ENCODE measurements at regions of chr1 and their contacts with region 1.

Region 1: GRCh38 chr1:46667782-46668760 is at the start of gene ATPAF1:
- DNase-seq: peak; percentile 90
- ATAC-seq: peak; percentile 95
- total RNA-seq, gene ATPAF1: 191 TPM

Region 2: DNA sequence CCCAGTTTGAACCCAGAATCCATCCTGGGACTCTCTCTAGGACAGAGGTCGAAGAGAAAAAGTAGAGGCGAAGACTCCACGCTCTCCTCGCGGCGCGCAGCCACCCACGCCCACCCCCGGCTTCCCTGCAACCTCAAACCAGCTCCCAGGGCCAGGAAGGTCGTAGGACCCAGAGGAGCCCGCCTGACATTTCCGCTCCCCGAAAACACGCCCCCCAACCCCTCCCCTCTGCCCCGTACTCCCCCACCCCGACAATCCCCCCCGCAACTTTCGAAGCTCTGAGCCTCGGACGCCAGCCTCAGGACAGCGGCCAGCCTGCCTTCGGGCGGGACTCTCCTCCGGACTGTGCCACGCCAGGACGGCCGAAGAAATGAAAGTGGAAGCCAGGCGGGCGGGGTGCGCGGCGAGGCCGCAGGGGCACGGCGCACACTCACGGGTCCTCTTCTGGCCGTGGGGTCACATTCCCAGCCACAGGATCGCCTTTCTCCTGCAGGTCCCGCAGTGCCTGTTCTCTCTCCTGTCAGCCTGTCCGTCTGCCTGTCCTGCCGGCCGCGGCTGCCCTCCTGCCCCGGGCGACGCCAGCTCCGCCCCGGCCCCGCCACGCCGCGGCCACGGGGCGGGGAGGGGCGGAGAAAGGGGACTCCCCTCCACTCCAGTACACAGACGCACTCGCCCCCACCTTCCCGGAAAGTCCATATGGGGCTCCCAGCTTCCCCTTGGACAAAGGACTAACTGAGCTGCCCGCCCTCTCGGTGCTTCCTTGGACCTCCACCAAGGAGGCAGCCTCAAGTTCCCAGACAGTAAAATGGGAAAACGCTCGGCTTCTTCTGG is 51.6 kb before region 1 on chr1 and contains the start of gene MOB3C:
- intact Hi-C with region 1: loop called (anchors 5 kb)
- DNase-seq: peak; percentile 94
- ATAC-seq: peak; percentile 94
- total RNA-seq, gene MOB3C: 13.9 TPM

Region 3: DNA sequence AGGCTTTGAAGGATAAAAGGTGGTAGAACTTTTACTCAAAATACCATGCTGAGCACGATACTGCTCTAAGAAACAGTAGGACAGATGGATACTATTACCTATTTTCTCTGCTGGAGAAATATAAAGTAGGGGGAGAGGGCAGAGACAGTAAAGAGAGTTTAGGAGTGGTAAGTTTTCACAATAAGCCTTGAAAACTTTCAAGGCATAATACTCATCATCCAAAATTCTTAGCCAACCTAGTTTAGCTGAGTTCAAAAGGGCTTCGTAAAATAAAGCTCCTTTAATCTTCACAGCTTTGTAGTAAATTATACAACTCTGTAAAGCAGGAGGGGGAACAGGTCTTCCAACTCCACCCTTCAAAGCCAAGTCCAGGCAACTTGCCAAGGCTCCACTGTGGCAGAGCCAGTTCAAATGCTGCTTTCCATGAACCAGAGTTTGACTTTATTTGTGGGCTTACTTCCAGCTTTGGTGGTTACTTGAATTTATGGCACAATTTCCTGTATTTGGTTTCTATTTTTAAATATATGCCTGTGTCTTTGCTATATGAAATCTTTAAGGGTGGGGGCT is 19.1 kb after region 1 on chr1:
- intact Hi-C with region 1: no loop called
- DNase-seq: no peak
- ATAC-seq: no peak

Region 4: GRCh38 chr1:46718727-46719622 is 50.9 kb after region 1 on chr1 and contains the start of gene EFCAB14:
- intact Hi-C with region 1: loop called (anchors 2 kb)
- DNase-seq: peak; percentile 98
- ATAC-seq: peak; percentile 99
- total RNA-seq, gene EFCAB14: 53.2 TPM

Region 5: DNA sequence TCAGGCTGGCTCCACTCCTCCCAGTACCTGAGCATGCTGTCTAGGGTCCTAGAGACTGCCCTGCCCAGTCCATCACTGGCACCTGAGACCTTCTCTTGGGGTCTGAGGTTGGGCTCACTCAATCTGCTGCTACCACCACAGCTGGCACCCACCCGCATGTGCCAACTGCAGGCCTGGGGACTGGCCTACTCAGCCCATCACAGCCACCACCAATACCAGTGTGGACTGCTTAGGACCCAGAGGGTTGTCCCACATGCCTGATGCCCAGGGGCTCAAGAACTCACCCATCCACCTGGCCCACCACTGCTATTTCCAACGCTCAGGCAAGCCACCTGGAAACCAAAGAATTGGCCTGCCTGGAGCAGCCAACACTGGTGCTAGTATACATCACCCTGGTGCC is 194.3 kb after region 1 on chr1:
- intact Hi-C with region 1: no loop called
- DNase-seq: no peak
- ATAC-seq: no peak